Activated CD4-positive, alpha-beta memory T cell treated with anti-CD3 and anti-CD28 coated beads for 36 hours (primary cell): ENCODE measurements at regions of chr7 and their contacts with region 1.

Region 1: GRCh38 chr7:27196287-27196767 is 3.6 kb downstream of the HOXA13 start:
- DNase-seq: peak; percentile 88
- H3K4me3 Mint-ChIP-seq: peak overlapping the region; percentile 26
- H3K27ac Mint-ChIP-seq: no peak overlapping the region
- H3K4me1 Mint-ChIP-seq: peaks cover 30% of the 10 kb centered on the region
- H3K27me3 Mint-ChIP-seq: peaks cover 71% of the 10 kb centered on the region

Region 2: GRCh38 chr7:27160546-27161213 is 35.6 kb before region 1 on chr7:
- CTCF ChIA-PET with region 1: interaction called, 11 read pairs
- POLR2A ChIA-PET with region 1: no interaction called
- intact Hi-C with region 1: no loop called
- DNase-seq: peak; percentile 87
- H3K4me3 Mint-ChIP-seq: peak overlapping the region; percentile 61
- H3K27ac Mint-ChIP-seq: no peak overlapping the region
- H3K4me1 Mint-ChIP-seq: peaks cover 28% of the 10 kb centered on the region
- H3K27me3 Mint-ChIP-seq: peaks cover 81% of the 10 kb centered on the region

Region 3: GRCh38 chr7:27210441-27211083 is 14.2 kb after region 1 on chr7:
- CTCF ChIA-PET with region 1: interaction called, 15 read pairs
- POLR2A ChIA-PET with region 1: no interaction called
- intact Hi-C with region 1: no loop called
- DNase-seq: peak; percentile 63
- H3K4me3 Mint-ChIP-seq: no peak overlapping the region
- H3K27ac Mint-ChIP-seq: no peak overlapping the region
- H3K4me1 Mint-ChIP-seq: peaks cover 14% of the 10 kb centered on the region
- H3K27me3 Mint-ChIP-seq: peaks cover 86% of the 10 kb centered on the region

Region 4: GRCh38 chr7:27251652-27252590 is 55.6 kb after region 1 on chr7:
- CTCF ChIA-PET with region 1: interaction called, 4 read pairs
- POLR2A ChIA-PET with region 1: no interaction called
- intact Hi-C with region 1: loop called (anchors 2 kb)
- DNase-seq: no peak
- H3K4me3 Mint-ChIP-seq: no peak overlapping the region
- H3K27ac Mint-ChIP-seq: no peak overlapping the region
- H3K4me1 Mint-ChIP-seq: peaks cover 9% of the 10 kb centered on the region
- H3K27me3 Mint-ChIP-seq: peaks cover 71% of the 10 kb centered on the region

Region 5: DNA sequence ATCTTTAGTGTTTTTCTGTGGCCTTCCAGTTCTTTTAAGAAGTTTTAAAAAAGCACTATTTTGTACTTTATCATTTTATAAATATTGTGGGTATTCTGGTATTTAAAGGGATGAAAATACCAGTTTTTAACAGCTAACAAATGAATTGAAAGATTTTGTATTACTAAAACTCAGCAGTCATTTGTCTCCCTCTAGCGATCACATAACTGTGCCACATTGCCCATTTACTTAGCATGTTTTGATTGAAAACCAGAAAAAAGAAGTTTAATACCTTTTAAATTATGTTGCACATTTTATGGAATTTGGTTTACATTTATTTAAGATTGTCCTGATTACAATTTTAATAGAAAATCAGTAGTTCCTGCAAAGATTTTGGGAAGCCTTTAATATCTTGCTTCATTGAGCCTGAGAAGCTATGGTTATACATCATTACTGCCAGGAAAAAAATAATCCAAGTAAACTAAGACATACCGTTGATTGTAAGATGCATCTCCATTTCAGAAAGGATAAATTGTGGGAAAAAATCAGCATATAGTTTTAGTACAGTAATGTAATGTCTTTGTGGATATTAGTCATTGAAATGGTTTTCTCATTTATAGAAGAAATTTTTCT is 578.5 kb after region 1 on chr7:
- CTCF ChIA-PET with region 1: interaction called, 12 read pairs
- POLR2A ChIA-PET with region 1: no interaction called
- intact Hi-C with region 1: loop called (anchors 5 kb)
- DNase-seq: no peak
- H3K4me3 Mint-ChIP-seq: no peak overlapping the region
- H3K27ac Mint-ChIP-seq: no peak overlapping the region
- H3K4me1 Mint-ChIP-seq: peaks cover 23% of the 10 kb centered on the region
- H3K27me3 Mint-ChIP-seq: no peaks in the 10 kb centered on the region

Region 6: DNA sequence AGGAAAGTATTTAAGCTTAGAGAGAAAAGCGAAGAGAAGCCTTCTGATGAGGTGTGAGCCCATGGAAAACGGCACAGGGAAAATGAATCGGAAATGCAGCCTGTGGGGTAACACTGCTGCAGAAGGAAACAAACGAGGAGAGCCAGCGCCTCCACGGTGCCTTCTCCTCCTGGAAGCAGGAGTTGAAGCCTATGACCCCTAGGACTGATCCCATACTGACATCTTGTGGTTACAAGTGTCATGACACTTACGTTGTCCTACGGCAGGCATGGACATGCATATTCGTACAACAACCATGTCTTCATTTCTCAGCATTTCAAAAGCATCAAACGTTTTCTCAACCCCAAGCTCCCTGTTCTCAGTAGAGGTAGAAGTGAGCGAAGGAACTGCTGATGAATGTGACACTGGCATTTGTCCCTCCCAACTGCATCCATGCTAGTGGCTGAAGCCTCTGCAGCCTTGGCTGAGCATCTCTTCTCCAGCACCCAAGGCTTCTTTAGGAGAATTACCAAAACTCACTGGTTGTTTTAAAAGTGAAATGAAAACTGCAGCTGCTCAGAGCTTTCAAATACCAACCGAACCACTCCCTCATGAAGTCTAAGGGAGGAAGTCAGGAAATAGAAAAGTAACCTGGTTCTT is 824.1 kb after region 1 on chr7:
- CTCF ChIA-PET with region 1: interaction called, 32 read pairs
- POLR2A ChIA-PET with region 1: no interaction called
- intact Hi-C with region 1: loop called (anchors 2 kb)
- DNase-seq: peak; percentile 39
- H3K4me3 Mint-ChIP-seq: no peak overlapping the region
- H3K27ac Mint-ChIP-seq: no peak overlapping the region
- H3K4me1 Mint-ChIP-seq: peaks cover 2% of the 10 kb centered on the region
- H3K27me3 Mint-ChIP-seq: no peaks in the 10 kb centered on the region